ENCODE measurements at regions of chr6 and their contacts with region 1.

Region 1: GRCh38 chr6:10954590-10955010 is 67.7 kb downstream of the SYCP2L start:
- DNase-seq: peak; percentile 94
- ATAC-seq: peak; percentile 96
- H3K4me3 Mint-ChIP-seq: no peak overlapping the region
- H3K27ac Mint-ChIP-seq: no peak overlapping the region
- H3K4me1 Mint-ChIP-seq: peaks cover 7% of the 10 kb centered on the region; the same call in 1 of the 2 replicates
- H3K27me3 Mint-ChIP-seq: peaks cover 20% of the 10 kb centered on the region
- CTCF ChIP-seq: peak; percentile 85

Region 2: GRCh38 chr6:9937031-9937763 is 1017.4 kb before region 1 on chr6:
- CTCF ChIA-PET with region 1: no interaction called
- POLR2A ChIA-PET with region 1: no interaction called
- DNase-seq: no peak
- ATAC-seq: no peak
- H3K4me3 Mint-ChIP-seq: no peak overlapping the region
- H3K27ac Mint-ChIP-seq: no peak overlapping the region
- H3K4me1 Mint-ChIP-seq: no peaks in the 10 kb centered on the region
- H3K27me3 Mint-ChIP-seq: no peaks in the 10 kb centered on the region
- CTCF ChIP-seq: no peak

Region 3: GRCh38 chr6:10668126-10668917 is 286.3 kb before region 1 on chr6:
- CTCF ChIA-PET with region 1: no interaction called
- POLR2A ChIA-PET with region 1: no interaction called
- DNase-seq: no peak
- ATAC-seq: no peak
- H3K4me3 Mint-ChIP-seq: no peak overlapping the region
- H3K27ac Mint-ChIP-seq: no peak overlapping the region
- H3K4me1 Mint-ChIP-seq: no peaks in the 10 kb centered on the region
- H3K27me3 Mint-ChIP-seq: peaks cover 9% of the 10 kb centered on the region
- CTCF ChIP-seq: no peak

Region 4: GRCh38 chr6:10759312-10759839 is 195.2 kb before region 1 on chr6:
- CTCF ChIA-PET with region 1: no interaction called
- POLR2A ChIA-PET with region 1: no interaction called
- DNase-seq: no peak
- ATAC-seq: peak; percentile 78
- H3K4me3 Mint-ChIP-seq: no peak overlapping the region
- H3K27ac Mint-ChIP-seq: peak overlapping the region; percentile 83
- H3K4me1 Mint-ChIP-seq: peaks cover 8% of the 10 kb centered on the region
- H3K27me3 Mint-ChIP-seq: no peaks in the 10 kb centered on the region
- CTCF ChIP-seq: peak; percentile 39; the same call in 1 of the 2 replicates

Region 5: GRCh38 chr6:10968776-10969175 is 14.2 kb after region 1 on chr6:
- CTCF ChIA-PET with region 1: interaction called, 14 read pairs
- POLR2A ChIA-PET with region 1: no interaction called
- DNase-seq: no peak
- ATAC-seq: no peak
- H3K4me3 Mint-ChIP-seq: no peak overlapping the region
- H3K27ac Mint-ChIP-seq: no peak overlapping the region
- H3K4me1 Mint-ChIP-seq: no peaks in the 10 kb centered on the region
- H3K27me3 Mint-ChIP-seq: peaks cover 32% of the 10 kb centered on the region
- CTCF ChIP-seq: no peak

Region 6: GRCh38 chr6:10995114-10995707 is 40.6 kb after region 1 on chr6:
- CTCF ChIA-PET with region 1: interaction called, 17 read pairs
- POLR2A ChIA-PET with region 1: no interaction called
- DNase-seq: no peak
- ATAC-seq: peak; percentile 61
- H3K4me3 Mint-ChIP-seq: no peak overlapping the region
- H3K27ac Mint-ChIP-seq: peak overlapping the region; percentile 55
- H3K4me1 Mint-ChIP-seq: peaks cover 30% of the 10 kb centered on the region
- H3K27me3 Mint-ChIP-seq: no peaks in the 10 kb centered on the region
- CTCF ChIP-seq: no peak

Region 7: DNA sequence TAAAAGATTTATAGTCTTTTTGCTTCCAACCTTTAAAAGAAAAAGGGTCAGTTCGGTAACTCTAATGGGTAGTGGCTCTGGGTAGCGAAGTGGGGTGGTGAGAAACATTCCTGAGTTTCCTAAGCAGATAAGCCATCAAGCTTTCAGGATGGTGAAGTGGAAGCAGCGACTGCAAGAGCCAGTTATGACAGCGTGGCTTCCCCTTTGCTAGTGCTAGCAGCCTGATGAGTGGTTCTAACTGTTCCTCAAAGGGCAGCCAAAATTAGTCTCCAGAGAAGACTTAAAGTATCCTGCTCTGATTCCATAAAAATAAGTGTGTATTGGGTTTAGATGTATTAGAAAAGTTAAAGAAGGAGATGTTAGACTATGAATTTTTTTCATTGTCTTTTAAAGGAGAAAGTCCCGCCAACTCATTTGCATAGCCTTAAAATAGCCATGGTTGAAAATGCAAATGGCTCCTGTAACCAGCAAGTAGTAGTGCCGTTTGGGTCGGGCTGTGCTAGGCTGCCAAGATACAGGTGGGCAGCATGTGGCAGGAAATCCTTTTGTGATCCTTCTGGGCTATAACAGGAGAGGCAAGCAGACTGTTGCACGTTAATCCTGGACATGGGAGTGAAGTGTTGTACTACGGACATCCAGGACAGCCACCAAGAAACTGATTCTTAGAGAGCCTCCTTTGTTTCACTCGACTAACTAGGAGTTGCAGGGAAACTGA is 71.5 kb after region 1 on chr6:
- CTCF ChIA-PET with region 1: interaction called, 20 read pairs
- POLR2A ChIA-PET with region 1: no interaction called
- DNase-seq: peak; percentile 26
- ATAC-seq: peak; percentile 77
- H3K4me3 Mint-ChIP-seq: peak overlapping the region; percentile 55
- H3K27ac Mint-ChIP-seq: peak overlapping the region; percentile 94
- H3K4me1 Mint-ChIP-seq: peaks cover 49% of the 10 kb centered on the region
- H3K27me3 Mint-ChIP-seq: no peaks in the 10 kb centered on the region
- CTCF ChIP-seq: no peak

Region 8: GRCh38 chr6:11043961-11044711 is 89.5 kb after region 1 on chr6 and contains the start of gene ELOVL2:
- CTCF ChIA-PET with region 1: interaction called, 23 read pairs
- POLR2A ChIA-PET with region 1: no interaction called
- DNase-seq: peak; percentile 70
- ATAC-seq: peak; percentile 79
- H3K4me3 Mint-ChIP-seq: peak within 1 kb of the TSS; percentile 84
- H3K27ac Mint-ChIP-seq: no peak within 1 kb of the TSS
- H3K4me1 Mint-ChIP-seq: peaks cover 14% of the 10 kb centered on the region
- H3K27me3 Mint-ChIP-seq: peaks cover 61% of the 10 kb centered on the region
- CTCF ChIP-seq: peak; percentile 88
- total RNA-seq, gene ELOVL2: 1.0 to 2.0 TPM (median 1.1 TPM) in 3 replicates

Region 9: GRCh38 chr6:11093589-11094410 is 139.2 kb after region 1 on chr6 and contains the start of gene SMIM13:
- CTCF ChIA-PET with region 1: interaction called, 13 read pairs
- POLR2A ChIA-PET with region 1: no interaction called
- DNase-seq: peak; percentile 98
- ATAC-seq: peak; percentile 94
- H3K4me3 Mint-ChIP-seq: peak within 1 kb of the TSS; percentile 93
- H3K27ac Mint-ChIP-seq: peak within 1 kb of the TSS; percentile 98
- H3K4me1 Mint-ChIP-seq: peaks cover 25% of the 10 kb centered on the region
- H3K27me3 Mint-ChIP-seq: no peaks in the 10 kb centered on the region; the same call in 1 of the 2 replicates
- CTCF ChIP-seq: peak; percentile 44; the same call in 1 of the 2 replicates
- total RNA-seq, gene SMIM13: 7.2 to 9.7 TPM (median 7.4 TPM) in 3 replicates

Region 10: GRCh38 chr6:11496152-11497060 is 541.8 kb after region 1 on chr6:
- CTCF ChIA-PET with region 1: interaction called, 16 read pairs
- POLR2A ChIA-PET with region 1: no interaction called
- DNase-seq: peak; percentile 58
- ATAC-seq: peak; percentile 90
- H3K4me3 Mint-ChIP-seq: no peak overlapping the region
- H3K27ac Mint-ChIP-seq: no peak overlapping the region; the same call in 1 of the 2 replicates
- H3K4me1 Mint-ChIP-seq: peaks cover 12% of the 10 kb centered on the region
- H3K27me3 Mint-ChIP-seq: no peaks in the 10 kb centered on the region
- CTCF ChIP-seq: peak; percentile 77

Measured in WTC11 (cell line).